ENCODE measurements at regions of chr12 and their contacts with region 1.

Region 1: GRCh38 chr12:104381731-104382480 is 74.8 kb upstream of the CHST11 start:
- DNase-seq: peak; percentile 94
- H3K4me3 Mint-ChIP-seq: no peak overlapping the region
- H3K27ac Mint-ChIP-seq: peak overlapping the region; percentile 18
- H3K4me1 Mint-ChIP-seq: peaks cover 17% of the 10 kb centered on the region
- H3K27me3 Mint-ChIP-seq: peaks cover 10% of the 10 kb centered on the region

Region 2: DNA sequence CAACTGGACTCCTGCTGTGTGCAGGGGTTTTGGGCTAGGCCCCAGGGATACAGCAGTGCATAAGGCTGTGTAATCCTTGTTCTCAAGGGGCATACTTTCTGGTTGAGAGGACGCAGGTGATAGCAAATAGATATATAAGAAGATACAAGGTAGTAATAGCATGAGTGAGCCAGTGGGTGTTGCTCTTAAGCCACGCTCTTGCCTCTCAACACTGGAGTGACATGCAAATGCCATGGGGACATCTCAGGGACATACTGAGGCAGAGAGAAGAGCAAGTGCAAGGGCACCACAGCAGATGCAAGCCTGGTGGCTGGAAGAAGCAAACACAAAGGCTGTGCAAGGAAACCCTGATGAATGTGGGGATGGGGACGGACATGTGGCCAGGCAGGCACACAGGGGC is 298.2 kb after region 1 on chr12:
- intact Hi-C with region 1: loop called (anchors 2 kb)
- DNase-seq: peak; percentile 82
- H3K4me3 Mint-ChIP-seq: peak overlapping the region; percentile 10
- H3K27ac Mint-ChIP-seq: peak overlapping the region; percentile 72
- H3K4me1 Mint-ChIP-seq: peaks cover 68% of the 10 kb centered on the region
- H3K27me3 Mint-ChIP-seq: no peaks in the 10 kb centered on the region

Region 3: GRCh38 chr12:104790296-104791125 is 408.6 kb after region 1 on chr12:
- intact Hi-C with region 1: loop called (anchors 10 kb)
- DNase-seq: peak; percentile 81
- H3K4me3 Mint-ChIP-seq: peak overlapping the region; percentile 28
- H3K27ac Mint-ChIP-seq: no peak overlapping the region
- H3K4me1 Mint-ChIP-seq: peaks cover 5% of the 10 kb centered on the region
- H3K27me3 Mint-ChIP-seq: peaks cover 3% of the 10 kb centered on the region

Region 4: GRCh38 chr12:104877123-104877705 is 495.3 kb after region 1 on chr12:
- intact Hi-C with region 1: loop called (anchors 1 kb)
- DNase-seq: peak; percentile 76
- H3K4me3 Mint-ChIP-seq: no peak overlapping the region
- H3K27ac Mint-ChIP-seq: no peak overlapping the region
- H3K4me1 Mint-ChIP-seq: peaks cover 3% of the 10 kb centered on the region
- H3K27me3 Mint-ChIP-seq: peaks cover 23% of the 10 kb centered on the region

Measured in activated CD4-positive, alpha-beta T cell treated with anti-CD3 and anti-CD28 coated beads, Interleukin-2, amount 10 ng/mL, durations not matched to agents 24 days and 14 days (primary cell).